Activated CD8-positive, alpha-beta T cell treated with anti-CD3 and anti-CD28 coated beads for 36 hours (primary cell): ENCODE measurements at regions of chr3 and their contacts with region 1.

Region 1: DNA sequence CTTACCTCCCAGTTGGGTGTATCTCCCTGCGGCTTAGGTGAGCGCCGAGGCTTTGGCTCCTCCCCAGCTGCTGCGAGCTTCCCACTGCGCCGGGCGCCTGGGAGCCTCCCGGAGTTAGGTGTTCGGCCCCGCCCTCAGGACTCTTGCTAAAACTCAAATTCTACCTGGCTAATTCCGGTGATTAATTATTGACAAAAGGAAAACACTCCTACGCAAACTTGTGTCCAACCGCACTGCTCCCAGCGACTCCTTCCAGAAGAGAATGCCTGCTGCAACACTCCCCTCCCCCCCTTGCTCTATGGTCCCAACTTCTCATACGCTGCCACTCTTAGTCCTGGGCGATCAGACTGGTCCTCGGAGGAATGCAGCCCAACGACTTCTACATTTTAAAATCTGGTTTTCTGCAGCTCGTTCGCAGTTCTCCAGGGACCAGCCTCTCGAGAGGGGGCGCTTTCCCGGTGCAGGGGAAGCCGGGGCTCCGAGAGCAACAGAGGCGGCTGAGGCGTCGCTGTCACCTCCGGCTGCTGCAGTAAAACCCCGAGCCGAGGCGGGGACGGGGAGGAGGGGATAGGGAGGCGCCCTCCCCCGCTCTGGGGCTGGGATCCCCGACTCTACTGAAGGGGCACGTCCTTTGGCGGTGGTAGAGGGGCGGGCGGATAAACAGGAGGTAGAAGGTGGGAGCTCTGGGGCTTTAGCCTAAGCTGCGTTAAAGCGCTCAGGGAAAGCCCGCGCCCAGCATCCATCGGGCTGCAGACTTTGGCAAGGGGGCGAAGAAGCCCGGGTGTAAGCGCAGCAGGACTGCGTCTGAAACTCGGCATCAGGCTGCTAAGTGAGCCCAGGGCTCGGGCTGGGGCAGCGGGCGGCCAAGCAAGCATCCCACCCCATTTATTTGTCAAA is at the start of gene SPTSSB:
- DNase-seq: peak; percentile 64
- ATAC-seq: peak; percentile 84
- H3K4me3 Mint-ChIP-seq: peak within 1 kb of the TSS; percentile 78
- H3K27ac Mint-ChIP-seq: no peak within 1 kb of the TSS
- H3K4me1 Mint-ChIP-seq: peaks cover 12% of the 10 kb centered on the region
- H3K27me3 Mint-ChIP-seq: peaks cover 43% of the 10 kb centered on the region
- CTCF ChIP-seq: no peak
- total RNA-seq, gene SPTSSB: not detected

Region 2: DNA sequence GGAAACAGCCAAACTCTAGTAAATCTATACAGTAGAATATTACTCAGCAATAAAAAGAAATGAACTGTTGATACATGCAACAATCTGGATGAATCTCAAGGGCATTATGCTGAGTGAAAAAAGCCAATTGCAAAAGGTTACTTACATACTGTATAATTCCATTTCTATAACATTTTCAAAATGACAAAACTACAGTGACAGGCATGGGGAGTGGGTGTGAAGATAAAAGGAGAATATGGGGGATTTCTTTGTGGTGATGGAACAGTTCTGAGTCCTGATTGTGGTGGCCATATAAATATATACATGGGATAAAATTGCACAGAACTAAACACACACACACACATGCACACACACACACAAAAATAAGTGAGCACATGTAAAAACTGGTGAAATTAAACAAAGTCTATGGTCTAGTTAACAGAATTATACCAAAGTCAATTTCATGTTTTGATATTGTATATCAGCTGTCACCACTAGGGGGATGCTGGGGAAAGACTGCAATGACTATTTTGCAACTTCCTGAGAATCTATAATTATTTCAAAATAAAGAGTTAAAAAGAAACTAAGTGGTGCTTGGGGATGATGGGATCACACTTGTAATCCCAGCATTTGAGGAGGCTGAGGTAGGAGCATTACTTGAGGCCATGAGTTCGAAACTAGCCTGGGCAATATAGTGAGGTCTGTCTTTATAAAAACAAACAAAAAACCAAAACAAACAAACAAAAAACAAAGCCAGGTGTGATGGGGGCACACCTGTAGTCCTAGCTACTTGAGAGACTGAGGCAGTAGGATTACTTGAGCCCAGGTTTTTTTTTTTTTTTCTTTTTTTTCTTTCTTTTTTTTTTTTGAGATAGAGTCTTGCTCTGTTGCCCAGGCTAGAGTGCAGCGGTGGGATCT is 66.3 kb before region 1 on chr3:
- CTCF ChIA-PET with region 1: interaction called, 10 read pairs
- POLR2A ChIA-PET with region 1: no interaction called
- intact Hi-C with region 1: no loop called
- DNase-seq: peak; percentile 20
- ATAC-seq: peak; percentile 58
- H3K4me3 Mint-ChIP-seq: no peak overlapping the region
- H3K27ac Mint-ChIP-seq: no peak overlapping the region
- H3K4me1 Mint-ChIP-seq: peaks cover 30% of the 10 kb centered on the region
- H3K27me3 Mint-ChIP-seq: peaks cover 25% of the 10 kb centered on the region
- CTCF ChIP-seq: peak; percentile 86

Region 3: GRCh38 chr3:161401389-161401788 is 29.7 kb after region 1 on chr3:
- CTCF ChIA-PET with region 1: no interaction called
- POLR2A ChIA-PET with region 1: no interaction called
- intact Hi-C with region 1: no loop called
- DNase-seq: no peak
- ATAC-seq: no peak
- H3K4me3 Mint-ChIP-seq: no peak overlapping the region
- H3K27ac Mint-ChIP-seq: no peak overlapping the region
- H3K4me1 Mint-ChIP-seq: peaks cover 14% of the 10 kb centered on the region
- H3K27me3 Mint-ChIP-seq: peaks cover 31% of the 10 kb centered on the region
- CTCF ChIP-seq: no peak

Region 4: DNA sequence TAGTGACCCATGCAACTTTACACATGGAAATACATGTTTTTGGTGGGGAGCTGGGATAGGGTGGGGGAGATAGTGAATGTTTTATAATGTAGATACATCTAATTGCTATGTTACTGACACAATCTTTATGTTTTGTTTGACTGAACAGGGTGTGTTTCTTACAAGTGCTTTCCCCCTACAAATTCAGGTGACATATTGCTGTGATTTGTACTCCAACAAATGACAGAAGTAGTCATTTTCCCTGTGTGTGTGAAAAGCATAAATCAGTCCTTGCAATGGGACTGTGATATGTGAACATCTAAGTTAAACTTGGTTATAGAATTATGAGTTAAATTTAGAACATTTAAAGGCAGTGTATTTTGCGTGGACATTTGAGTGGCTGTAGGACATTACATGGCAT is 152.2 kb after region 1 on chr3:
- CTCF ChIA-PET with region 1: no interaction called
- POLR2A ChIA-PET with region 1: no interaction called
- intact Hi-C with region 1: no loop called
- DNase-seq: no peak
- ATAC-seq: no peak
- H3K4me3 Mint-ChIP-seq: no peak overlapping the region
- H3K27ac Mint-ChIP-seq: no peak overlapping the region
- H3K4me1 Mint-ChIP-seq: no peaks in the 10 kb centered on the region
- H3K27me3 Mint-ChIP-seq: no peaks in the 10 kb centered on the region
- CTCF ChIP-seq: no peak